A549 (cell line): ENCODE measurements at regions of chrX and their contacts with region 1.

Region 1: DNA sequence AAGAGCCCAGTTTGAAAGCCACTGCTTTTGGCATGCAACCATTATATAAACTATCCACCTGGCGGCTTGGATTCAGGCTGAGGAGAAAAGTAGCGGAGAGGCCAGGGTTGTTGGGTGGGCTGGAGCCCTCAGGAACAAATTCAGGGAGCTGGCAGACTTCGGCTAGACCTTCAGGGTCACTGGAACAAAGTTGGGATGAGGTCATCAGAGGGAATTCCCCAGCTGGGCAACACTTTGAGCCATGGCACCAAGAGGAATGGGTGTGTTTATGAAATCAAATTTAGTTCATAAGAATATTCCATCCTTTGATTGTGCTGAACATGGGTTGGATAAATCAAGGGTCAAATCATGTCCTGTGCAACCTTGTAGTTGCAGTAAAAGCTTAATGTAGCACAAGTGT is 22.0 kb downstream of the MTMR1 start:
- DNase-seq: no peak
- ATAC-seq: no peak
- H3K4me3 ChIP-seq: no peak overlapping the region
- H3K27ac ChIP-seq: no peak overlapping the region
- H3K4me1 ChIP-seq: 0 out of 3 replicates have a peak, but pooled peaks cover 6% of the 10 kb centered on the region
- CTCF ChIP-seq: no peak
- EP300 ChIP-seq: no peak
- POLR2A ChIP-seq: no peak
- RAD21 ChIP-seq: no peak

Region 2: DNA sequence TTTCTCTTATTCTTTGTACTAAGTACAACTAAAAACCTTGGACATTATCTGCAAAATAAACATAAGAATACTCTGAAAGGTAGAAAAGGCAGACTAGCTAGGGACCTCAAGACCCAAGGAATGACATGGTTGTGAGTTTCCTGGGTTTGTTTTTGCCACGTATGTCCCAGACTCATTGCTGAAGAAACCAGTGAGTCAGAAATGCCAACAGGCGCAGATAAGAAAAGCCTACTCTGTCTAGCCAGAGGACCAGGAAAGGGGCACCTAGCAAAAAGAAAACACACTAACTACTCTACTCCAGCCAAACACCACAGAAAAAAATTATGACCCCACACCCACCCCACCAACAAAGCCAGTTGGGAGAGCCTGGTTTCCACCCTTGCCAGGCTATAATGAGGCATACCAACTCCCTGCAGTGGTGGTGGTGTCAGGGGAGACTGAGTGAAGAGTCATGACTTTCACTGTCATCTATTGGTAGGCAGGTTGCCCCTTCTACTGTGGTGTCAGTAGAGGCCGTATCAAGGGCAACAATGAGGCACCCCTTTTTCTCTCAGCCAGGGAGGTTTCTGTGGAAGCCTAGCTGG is 11.1 kb before region 1 on chrX:
- CTCF ChIA-PET with region 1: interaction called, 11 read pairs
- POLR2A ChIA-PET with region 1: no interaction called
- DNase-seq: no peak
- ATAC-seq: no peak
- H3K4me3 ChIP-seq: no peak overlapping the region
- H3K27ac ChIP-seq: no peak overlapping the region
- H3K4me1 ChIP-seq: no peaks in the 10 kb centered on the region
- CTCF ChIP-seq: no peak
- EP300 ChIP-seq: no peak
- POLR2A ChIP-seq: no peak
- RAD21 ChIP-seq: no peak